GM18951 (cell line): ENCODE measurements at regions of chr6 and their contacts with region 1.

Region 1: GRCh38 chr6:7725849-7726415 is at the start of gene BMP6:
- POLR2A ChIP-seq: no peak

Region 2: DNA sequence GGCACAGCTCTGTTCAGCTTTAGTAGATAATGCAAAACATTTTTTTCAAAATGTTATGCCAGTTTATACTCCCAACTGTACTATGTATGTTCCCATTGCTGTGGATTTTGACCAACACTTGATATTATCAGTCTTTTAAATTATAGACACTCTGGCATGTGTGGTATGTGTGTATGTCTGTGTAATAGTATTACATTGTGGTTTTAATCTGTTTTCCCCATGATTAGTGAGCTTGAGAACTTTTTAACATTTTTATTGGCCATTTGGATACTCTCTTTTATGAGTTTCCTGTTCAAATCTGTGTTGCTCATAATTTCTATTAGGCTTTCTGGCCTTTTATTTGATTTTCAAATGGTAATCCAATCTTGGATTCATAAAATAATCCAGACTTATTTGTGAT is 253.9 kb after region 1 on chr6:
- in situ Hi-C with region 1: loop called (anchors 10 kb)
- POLR2A ChIP-seq: no peak

Region 3: DNA sequence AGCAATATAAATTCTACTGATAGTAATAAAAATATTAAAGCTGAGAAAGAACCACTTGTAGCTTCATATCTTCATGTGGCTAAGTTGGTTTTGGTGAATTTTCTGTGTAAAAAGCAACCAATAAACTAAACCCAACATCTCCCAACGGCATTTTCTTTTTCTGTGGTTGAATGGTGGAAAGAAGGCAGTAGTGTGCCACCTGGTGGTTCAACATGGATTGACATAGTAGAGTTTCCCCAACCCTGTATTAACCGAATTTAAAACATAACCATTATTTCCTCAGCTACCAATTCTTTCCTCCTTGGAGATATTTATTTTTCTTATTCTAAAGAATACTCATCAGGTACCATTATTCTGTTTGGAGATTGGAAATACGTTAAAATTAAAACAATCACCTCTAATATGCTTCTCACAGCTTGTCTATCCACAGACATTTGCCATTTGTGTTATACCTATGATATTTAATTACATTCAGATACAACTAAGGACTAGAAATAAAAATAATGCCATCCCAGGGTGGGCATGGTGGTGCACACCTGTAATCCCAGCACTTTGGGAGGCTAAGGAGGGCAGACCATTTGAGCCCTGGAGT is 493.5 kb after region 1 on chr6:
- in situ Hi-C with region 1: loop called (anchors 25 kb)
- POLR2A ChIP-seq: no peak